ENCODE measurements at regions of chr7 and their contacts with region 1.

Region 1: DNA sequence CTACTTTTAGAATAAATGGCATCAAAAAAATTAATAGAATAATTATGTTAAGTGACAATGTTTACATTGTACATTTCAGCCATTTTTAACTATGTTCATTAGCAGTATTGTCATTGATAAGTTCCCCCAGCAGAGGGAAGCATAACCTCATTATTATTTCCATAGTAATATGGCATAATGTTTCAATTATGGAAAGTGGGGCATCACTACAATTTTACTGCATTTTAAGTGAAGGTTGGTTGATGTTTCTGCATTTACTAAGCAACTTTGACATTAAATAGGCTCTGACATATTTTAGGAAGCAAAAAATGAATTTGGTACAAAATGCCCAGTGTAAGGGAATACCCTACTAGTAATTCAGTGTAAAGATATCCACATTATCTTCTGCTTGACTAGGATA is 218.3 kb downstream of the SEMA3A start:
- DNase-seq: peak in 1 of 2 experiments; percentile 35
- H3K4me3 ChIP-seq: no peak overlapping the region
- H3K27ac ChIP-seq: no peak overlapping the region
- H3K4me1 ChIP-seq: no peaks in the 10 kb centered on the region
- H3K27me3 ChIP-seq: no peaks in the 10 kb centered on the region
- CTCF ChIP-seq: peak; percentile 83

Region 2: GRCh38 chr7:83936056-83936708 is 40.1 kb before region 1 on chr7:
- CTCF ChIA-PET with region 1: no interaction called
- POLR2A ChIA-PET with region 1: no interaction called
- intact Hi-C with region 1: loop called (anchors 1 kb)
- DNase-seq: peak; percentile 49 to 72
- H3K4me3 ChIP-seq: no peak overlapping the region
- H3K27ac ChIP-seq: no peak overlapping the region
- H3K4me1 ChIP-seq: no peaks in the 10 kb centered on the region
- H3K27me3 ChIP-seq: no peaks in the 10 kb centered on the region
- CTCF ChIP-seq: peak; percentile 91

Region 3: DNA sequence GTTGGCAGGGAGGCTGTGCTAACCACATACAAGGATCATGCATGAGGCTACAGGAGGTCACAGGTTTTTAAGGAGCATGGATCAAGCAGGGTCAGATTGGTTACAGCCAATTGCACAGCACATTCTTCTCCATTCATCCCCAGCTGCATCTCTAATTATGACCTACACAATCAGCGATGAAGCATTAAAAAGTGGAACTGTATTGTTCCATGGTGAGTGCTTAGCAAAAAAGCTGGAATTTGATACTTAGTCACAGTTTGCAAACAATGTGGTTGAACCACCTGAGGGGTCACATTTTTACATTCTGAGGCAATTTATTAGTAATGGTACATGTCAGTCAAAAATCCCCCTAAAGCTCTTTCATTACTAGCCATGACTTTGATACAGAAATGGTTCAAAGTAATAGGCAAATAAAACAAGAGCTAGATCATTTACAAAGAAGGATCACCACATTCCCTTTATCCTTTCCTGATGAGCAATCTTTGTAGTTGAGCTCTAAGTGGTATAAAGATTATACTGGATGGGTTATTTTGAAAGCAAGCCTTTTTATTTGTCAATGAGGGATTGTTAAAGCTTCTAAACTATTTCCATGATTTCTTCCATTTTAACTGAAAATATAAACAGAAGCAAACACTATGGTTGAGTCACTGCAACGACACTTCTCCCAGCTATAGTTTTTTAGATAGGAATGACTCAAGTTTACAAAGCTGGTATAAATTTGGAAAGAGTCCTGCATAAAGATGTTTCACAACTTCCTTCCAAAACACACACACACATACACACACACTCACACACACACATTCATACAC is 436.1 kb after region 1 on chr7:
- CTCF ChIA-PET with region 1: no interaction called
- POLR2A ChIA-PET with region 1: no interaction called
- intact Hi-C with region 1: loop called (anchors 10 kb)
- DNase-seq: peak; percentile 44 to 95
- H3K4me3 ChIP-seq: no peak overlapping the region
- H3K27ac ChIP-seq: peak overlapping the region; percentile 93
- H3K4me1 ChIP-seq: peaks cover 28% of the 10 kb centered on the region
- H3K27me3 ChIP-seq: no peaks in the 10 kb centered on the region
- CTCF ChIP-seq: no peak

Region 4: GRCh38 chr7:84454174-84454959 is 478.1 kb after region 1 on chr7:
- CTCF ChIA-PET with region 1: no interaction called
- POLR2A ChIA-PET with region 1: no interaction called
- intact Hi-C with region 1: loop called (anchors 5 kb)
- DNase-seq: no peak
- H3K4me3 ChIP-seq: no peak overlapping the region
- H3K27ac ChIP-seq: no peak overlapping the region
- H3K4me1 ChIP-seq: no peaks in the 10 kb centered on the region
- H3K27me3 ChIP-seq: no peaks in the 10 kb centered on the region
- CTCF ChIP-seq: no peak; the same call in 1 of the 2 replicates